ENCODE measurements at regions of chr5 and their contacts with region 1.

Region 1: GRCh38 chr5:15021266-15022046 is 149.9 kb upstream of the ANKH start:
- DNase-seq: no peak
- H3K4me3 ChIP-seq: peak overlapping the region in 1 of 2 donors; percentile 50
- H3K27ac ChIP-seq: peak overlapping the region; percentile 73 to 79
- H3K4me1 ChIP-seq: peaks cover 4 to 6% of the 10 kb centered on the region in 2 donors
- H3K27me3 ChIP-seq: no peaks in the 10 kb centered on the region
- CTCF ChIP-seq: no peak

Region 2: DNA sequence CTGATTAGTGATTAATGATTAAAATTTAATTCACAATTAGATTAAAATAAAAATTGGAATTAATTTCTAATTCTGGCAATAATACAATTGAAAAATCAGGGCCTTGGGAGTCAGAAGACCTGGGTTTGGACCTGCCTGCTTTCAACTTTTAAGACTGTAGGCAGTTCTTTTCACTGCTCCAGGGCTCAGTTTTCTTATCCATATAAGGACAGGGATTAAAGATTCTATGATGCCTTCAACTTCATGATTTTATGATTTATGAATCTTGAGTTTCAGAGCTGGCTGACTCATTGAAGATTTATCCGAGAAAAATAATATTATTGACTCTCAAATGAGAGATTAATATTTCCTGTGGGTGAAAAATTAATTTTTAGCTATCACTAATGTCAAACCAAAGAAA is 58.8 kb after region 1 on chr5:
- intact Hi-C with region 1: loop called (anchors 5 kb)
- DNase-seq: no peak
- H3K4me3 ChIP-seq: no peak overlapping the region
- H3K27ac ChIP-seq: peak overlapping the region; percentile 67 to 78
- H3K4me1 ChIP-seq: peaks cover 3 to 22% of the 10 kb centered on the region in 2 donors
- H3K27me3 ChIP-seq: no peaks in the 10 kb centered on the region
- CTCF ChIP-seq: no peak

Region 3: GRCh38 chr5:15834596-15835245 is 813.3 kb after region 1 on chr5:
- intact Hi-C with region 1: loop called (anchors 10 kb)
- DNase-seq: no peak
- H3K4me3 ChIP-seq: no peak overlapping the region
- H3K27ac ChIP-seq: no peak overlapping the region
- H3K4me1 ChIP-seq: peaks cover 0 to 7% of the 10 kb centered on the region in 2 donors
- H3K27me3 ChIP-seq: no peaks in the 10 kb centered on the region
- CTCF ChIP-seq: no peak